Left colon (tissue), 2 donors: ENCODE measurements at regions of chr15 and their contacts with region 1.

Region 1: DNA sequence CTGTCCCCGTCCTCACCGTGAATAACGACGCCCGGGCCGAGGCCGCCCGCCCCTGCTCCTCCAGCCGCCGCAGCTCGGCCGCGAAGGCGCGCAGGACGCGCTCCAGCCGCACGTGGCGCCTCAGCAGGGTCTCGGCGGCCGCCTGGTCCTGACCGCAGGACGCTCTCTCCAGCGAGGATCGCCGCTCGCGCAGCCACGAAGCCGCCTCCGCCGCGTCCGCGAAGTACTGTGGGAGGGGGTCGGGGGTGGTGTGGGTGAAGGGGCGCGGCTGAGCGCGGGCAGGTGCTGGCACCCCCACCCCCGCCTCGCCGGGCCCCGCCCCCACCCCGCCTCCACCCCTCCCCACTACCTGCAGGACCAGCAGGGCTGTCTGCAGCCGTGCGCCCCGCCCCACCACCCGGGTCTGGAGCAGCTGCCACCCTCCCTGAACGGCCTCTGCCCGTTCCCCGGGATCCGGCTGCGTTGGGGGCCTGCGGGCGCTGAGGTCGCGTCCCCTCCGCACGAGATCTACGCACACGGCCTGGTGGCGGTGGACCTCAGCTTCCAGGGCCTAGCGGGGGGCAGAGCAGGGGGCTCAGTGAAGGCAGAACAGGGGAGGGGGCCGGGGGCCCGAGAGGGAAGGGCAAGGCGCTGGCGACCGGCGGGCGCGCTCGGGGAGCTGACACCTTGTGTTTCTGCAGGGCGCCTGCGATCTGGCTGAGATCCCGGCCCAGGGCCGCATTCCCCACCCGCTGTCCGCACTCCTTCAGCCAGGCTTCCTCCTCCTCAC is 11.7 kb downstream of the SPTBN5 start:
- DNase-seq: peak; percentile 41 to 43
- ATAC-seq: peak; percentile 81

Region 2: DNA sequence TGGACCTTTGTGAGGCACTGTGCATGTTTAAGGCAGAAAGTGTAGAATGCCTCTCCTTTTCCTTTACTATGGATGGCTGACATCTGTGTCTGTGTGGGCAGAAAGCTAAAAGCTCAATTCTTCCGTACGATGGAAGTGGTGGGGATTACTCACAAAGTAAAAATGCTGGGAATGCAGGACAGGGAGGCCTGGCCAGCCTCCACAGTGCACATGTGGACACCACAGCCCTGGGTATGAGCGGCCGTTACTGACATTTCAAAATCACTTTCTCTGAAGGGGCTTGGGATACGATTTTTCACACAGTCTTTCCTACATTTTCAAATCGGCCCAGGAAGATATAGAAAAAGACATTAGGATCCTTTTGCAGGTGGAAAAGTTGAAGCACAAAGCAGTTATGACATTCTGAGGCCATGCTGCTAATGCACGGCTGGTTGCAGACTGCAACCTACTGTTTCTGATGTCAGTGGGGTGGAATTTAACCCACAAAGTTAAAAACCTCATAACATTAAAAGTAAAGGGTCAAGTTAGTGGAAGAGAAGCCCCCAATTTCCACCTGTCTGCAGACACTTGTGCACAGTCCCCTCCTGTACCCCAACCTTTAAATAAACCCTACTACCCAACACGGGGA is 62.3 kb after region 1 on chr15:
- intact Hi-C with region 1: loop called in 1 of 2 experiments (anchors 10 kb)
- DNase-seq: no peak
- ATAC-seq: no peak